GM12878 (cell line): ENCODE measurements at regions of chr18 and their contacts with region 1.

Region 1: DNA sequence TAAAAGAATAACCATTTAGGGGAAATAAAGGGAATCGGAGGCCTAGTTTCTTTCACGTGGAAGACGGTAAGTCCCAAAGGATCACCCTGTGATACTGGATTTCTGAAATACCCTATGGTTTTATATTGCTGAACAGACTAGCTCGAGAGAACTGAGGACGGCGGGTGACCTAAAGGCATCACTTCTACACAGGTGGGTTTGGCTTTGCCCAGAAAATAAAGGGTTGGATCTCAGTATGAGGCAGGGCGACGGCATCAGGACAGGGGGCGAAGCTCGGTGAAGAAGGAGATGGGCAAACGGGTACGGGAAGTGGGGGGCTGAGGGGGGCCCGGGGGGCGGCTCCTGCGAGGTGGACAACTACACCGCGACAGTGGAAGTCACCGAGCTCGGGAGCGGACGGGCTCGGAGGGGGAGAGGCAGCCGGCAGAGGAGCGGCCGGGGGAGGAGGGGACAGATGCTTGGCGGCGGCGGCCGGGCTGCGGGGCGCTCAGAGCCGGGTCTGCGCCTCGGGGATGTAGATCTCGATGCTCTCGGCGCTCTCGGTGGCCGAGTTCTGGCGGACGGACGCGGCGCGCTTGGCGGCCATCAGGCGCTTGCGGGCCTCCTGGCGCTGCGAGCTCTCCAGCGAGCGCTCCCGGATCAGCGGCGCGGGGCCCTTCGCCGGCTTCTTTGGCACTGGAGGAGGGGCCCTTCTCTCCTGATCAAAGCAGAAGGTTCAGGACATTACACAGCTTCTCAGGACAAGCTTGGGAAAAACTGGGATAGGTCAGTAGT is 48.9 kb downstream of the TGIF1 start:
- DNase-seq: no peak
- ATAC-seq: peak; percentile 50
- H3K4me3 ChIP-seq: no peak overlapping the region
- H3K27ac ChIP-seq: no peak overlapping the region
- H3K4me1 ChIP-seq: no peaks in the 10 kb centered on the region
- H3K27me3 ChIP-seq: peaks cover 0 to 16% of the 10 kb centered on the region in 2 experiments; a peak in 2 of 4 replicates
- CTCF ChIP-seq: no peak
- EP300 ChIP-seq: no peak
- POLR2A ChIP-seq: no peak
- RAD21 ChIP-seq: no peak

Region 2: DNA sequence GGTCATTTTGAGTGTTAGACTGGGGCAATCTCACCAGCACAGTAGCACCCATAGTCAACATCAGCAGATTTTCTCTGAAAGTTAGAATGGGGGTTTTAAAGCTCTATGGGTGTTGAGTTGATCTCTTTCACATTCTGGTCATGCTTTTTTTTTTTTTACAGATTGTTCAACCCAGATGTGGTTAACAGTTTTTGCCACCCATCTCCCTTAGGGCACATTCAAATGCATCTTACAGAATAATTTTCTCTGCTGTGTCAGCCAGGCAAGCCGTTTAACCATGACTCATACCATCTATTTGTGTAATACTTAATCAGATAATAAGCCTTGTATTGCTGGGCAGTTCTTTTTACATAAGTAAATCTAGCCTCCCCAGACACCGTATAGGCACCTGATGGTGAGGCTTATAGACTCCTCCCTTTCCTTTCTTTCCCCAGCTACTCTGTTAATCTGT is 13.1 kb after region 1 on chr18:
- CTCF ChIA-PET with region 1: interaction called, 4 read pairs
- POLR2A ChIA-PET with region 1: interaction called, 3 read pairs
- RAD21 ChIA-PET with region 1: no interaction called
- SMC1A ChIA-PET with region 1: interaction called, 14 read pairs
- in situ Hi-C with region 1: no loop called
- intact Hi-C with region 1: no loop called
- DNase-seq: no peak
- ATAC-seq: peak; percentile 78
- H3K4me3 ChIP-seq: no peak overlapping the region
- H3K27ac ChIP-seq: no peak overlapping the region
- H3K4me1 ChIP-seq: peaks cover 9% of the 10 kb centered on the region
- H3K27me3 ChIP-seq: no peaks in the 10 kb centered on the region
- CTCF ChIP-seq: no peak
- EP300 ChIP-seq: no peak; a peak in 1 of 4 replicates
- POLR2A ChIP-seq: no peak
- RAD21 ChIP-seq: no peak